CD4-positive, alpha-beta T cell (primary cell): ENCODE measurements at regions of chr2 and their contacts with region 1.

Region 1: GRCh38 chr2:198127627-198128026 is 323.2 kb downstream of the PLCL1 start:
- DNase-seq: peak; percentile 12 to 76 (median 40)
- ATAC-seq: peak; percentile 77
- H3K4me3 ChIP-seq: no peak overlapping the region
- H3K4me3 Mint-ChIP-seq: no peak overlapping the region
- H3K27ac ChIP-seq: no peak overlapping the region
- H3K27ac Mint-ChIP-seq: no peak overlapping the region
- H3K4me1 ChIP-seq: no peaks in the 10 kb centered on the region
- H3K4me1 Mint-ChIP-seq: peaks cover 6% of the 10 kb centered on the region
- H3K27me3 ChIP-seq: no peaks in the 10 kb centered on the region
- H3K27me3 Mint-ChIP-seq: no peaks in the 10 kb centered on the region
- CTCF ChIP-seq: peak; percentile 75

Region 2: DNA sequence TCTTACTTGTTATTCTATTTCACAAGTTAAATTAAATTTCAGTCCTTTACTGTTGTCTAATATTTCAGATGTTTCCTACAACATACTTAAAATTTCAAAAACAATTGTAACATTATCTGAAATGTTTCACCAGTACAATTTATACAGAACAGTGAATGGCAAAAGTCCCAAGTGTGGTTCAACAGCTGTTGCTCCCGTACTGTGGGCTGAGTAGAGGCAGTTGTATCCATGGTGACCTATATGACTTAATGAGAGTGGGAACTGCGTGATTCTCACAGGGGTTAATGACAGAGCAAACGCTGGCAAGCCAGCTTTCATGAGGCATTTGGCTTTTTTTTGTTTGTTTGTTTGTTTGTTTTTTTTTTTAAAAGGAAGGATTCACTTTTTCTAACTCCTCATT is 328.6 kb before region 1 on chr2:
- CTCF ChIA-PET with region 1: interaction called, 10 read pairs
- POLR2A ChIA-PET with region 1: interaction called, 11 read pairs
- intact Hi-C with region 1: loop called (anchors 1 kb)
- DNase-seq: no peak
- ATAC-seq: no peak
- H3K4me3 ChIP-seq: no peak overlapping the region
- H3K4me3 Mint-ChIP-seq: no peak overlapping the region
- H3K27ac ChIP-seq: no peak overlapping the region
- H3K27ac Mint-ChIP-seq: no peak overlapping the region
- H3K4me1 ChIP-seq: peaks cover 8% of the 10 kb centered on the region
- H3K4me1 Mint-ChIP-seq: peaks cover 11% of the 10 kb centered on the region
- H3K27me3 ChIP-seq: no peaks in the 10 kb centered on the region
- H3K27me3 Mint-ChIP-seq: peaks cover 10% of the 10 kb centered on the region
- CTCF ChIP-seq: no peak

Region 3: GRCh38 chr2:197857476-197858107 is 270.0 kb before region 1 on chr2:
- CTCF ChIA-PET with region 1: no interaction called
- POLR2A ChIA-PET with region 1: no interaction called
- intact Hi-C with region 1: no loop called
- DNase-seq: no peak
- ATAC-seq: no peak
- H3K4me3 ChIP-seq: no peak overlapping the region
- H3K4me3 Mint-ChIP-seq: peak overlapping the region; percentile 30
- H3K27ac ChIP-seq: no peak overlapping the region
- H3K27ac Mint-ChIP-seq: peak overlapping the region; percentile 2
- H3K4me1 ChIP-seq: no peaks in the 10 kb centered on the region
- H3K4me1 Mint-ChIP-seq: peaks cover 91% of the 10 kb centered on the region
- H3K27me3 ChIP-seq: no peaks in the 10 kb centered on the region
- H3K27me3 Mint-ChIP-seq: no peaks in the 10 kb centered on the region
- CTCF ChIP-seq: no peak